Activated CD8-positive, alpha-beta T cell treated with anti-CD3 and anti-CD28 coated beads for 36 hours (primary cell): ENCODE measurements at regions of chr10 and their contacts with region 1.

Region 1: GRCh38 chr10:132446661-132447194 is 49.7 kb downstream of the PWWP2B start:
- DNase-seq: peak; percentile 92
- ATAC-seq: peak; percentile 69
- H3K4me3 Mint-ChIP-seq: peak overlapping the region; percentile 77
- H3K27ac Mint-ChIP-seq: peak overlapping the region; percentile 98
- H3K4me1 Mint-ChIP-seq: peaks cover 35% of the 10 kb centered on the region
- H3K27me3 Mint-ChIP-seq: no peaks in the 10 kb centered on the region
- CTCF ChIP-seq: peak; percentile 69

Region 2: DNA sequence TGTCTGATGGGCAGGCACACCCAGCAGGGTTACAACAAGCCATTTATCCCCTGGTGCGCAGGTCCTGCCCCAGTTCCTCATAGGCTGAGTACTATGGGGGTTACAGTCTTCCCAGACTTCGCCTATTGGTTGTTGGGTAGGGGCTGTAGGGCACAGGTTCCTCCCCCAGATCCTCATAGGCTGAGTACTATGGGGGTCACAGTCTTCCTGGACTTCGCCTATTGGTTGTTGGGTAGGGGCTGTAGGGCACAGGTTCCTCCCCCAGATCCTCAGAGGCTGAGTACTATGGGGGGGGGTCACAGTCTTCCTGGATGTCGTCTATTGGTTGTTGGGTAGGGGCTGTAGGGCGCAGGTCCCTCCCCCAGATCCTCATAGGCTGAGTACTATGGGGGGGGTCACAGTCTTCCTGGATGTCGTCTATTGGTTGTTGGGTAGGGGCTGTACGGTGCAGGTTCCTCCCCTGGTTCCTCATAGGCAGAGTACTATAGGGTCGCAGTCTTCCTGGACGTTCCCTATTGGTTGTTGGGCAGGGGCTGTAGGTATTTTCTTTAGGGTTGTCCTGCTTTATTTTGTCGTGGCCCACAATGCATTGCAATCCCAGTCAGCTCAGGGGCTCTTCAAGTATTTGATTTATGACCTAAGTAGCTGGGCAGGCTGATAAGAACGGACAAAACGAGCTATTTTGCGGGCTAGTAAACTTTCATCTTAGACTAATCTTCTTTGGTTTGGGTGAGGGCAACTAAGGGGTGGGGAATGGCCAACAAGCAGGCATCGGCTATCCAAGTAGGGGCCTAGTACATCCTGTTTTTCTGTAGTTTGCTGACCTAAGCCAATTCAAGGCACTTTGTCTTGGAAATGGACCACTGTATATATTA is 111.3 kb before region 1 on chr10:
- CTCF ChIA-PET with region 1: no interaction called
- POLR2A ChIA-PET with region 1: no interaction called
- intact Hi-C with region 1: no loop called
- DNase-seq: no peak
- ATAC-seq: no peak
- H3K4me3 Mint-ChIP-seq: peak overlapping the region; percentile 72
- H3K27ac Mint-ChIP-seq: no peak overlapping the region
- H3K4me1 Mint-ChIP-seq: peaks cover 34% of the 10 kb centered on the region
- H3K27me3 Mint-ChIP-seq: no peaks in the 10 kb centered on the region
- CTCF ChIP-seq: no peak

Region 3: DNA sequence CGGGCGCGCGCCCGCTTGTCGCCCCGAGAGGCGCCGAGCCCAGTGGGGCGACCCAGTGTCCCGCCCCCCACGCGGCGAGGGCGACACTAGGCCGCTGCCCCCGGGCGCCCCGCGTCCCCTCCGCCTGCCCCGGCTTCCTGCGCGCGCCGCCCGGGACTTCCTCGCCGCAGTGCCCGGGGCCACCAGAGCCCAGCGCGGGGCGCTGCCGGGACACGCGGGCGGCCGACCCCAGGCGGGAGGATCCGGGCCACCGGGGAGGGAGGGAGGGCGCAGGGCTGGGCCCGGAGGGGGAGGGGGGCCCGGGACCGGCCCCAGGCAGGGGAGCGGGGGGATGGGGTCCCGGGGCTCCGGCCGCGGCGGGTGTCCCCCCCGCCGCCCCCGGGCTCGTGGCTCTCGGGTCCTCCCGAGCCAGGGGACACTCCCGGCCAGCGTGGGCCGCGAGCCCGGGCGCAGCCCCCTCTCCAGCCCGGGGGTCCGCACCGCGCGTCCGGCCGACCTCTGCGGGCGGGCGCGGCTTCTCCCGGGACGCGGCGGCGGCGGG is 50.2 kb before region 1 on chr10:
- CTCF ChIA-PET with region 1: interaction called, 8 read pairs
- POLR2A ChIA-PET with region 1: interaction called, 22 read pairs
- intact Hi-C with region 1: no loop called
- DNase-seq: peak; percentile 67
- ATAC-seq: peak; percentile 74
- H3K4me3 Mint-ChIP-seq: no peak overlapping the region
- H3K27ac Mint-ChIP-seq: no peak overlapping the region
- H3K4me1 Mint-ChIP-seq: peaks cover 23% of the 10 kb centered on the region
- H3K27me3 Mint-ChIP-seq: no peaks in the 10 kb centered on the region
- CTCF ChIP-seq: no peak